ENCODE measurements at regions of chr19 and their contacts with region 1.

Region 1: DNA sequence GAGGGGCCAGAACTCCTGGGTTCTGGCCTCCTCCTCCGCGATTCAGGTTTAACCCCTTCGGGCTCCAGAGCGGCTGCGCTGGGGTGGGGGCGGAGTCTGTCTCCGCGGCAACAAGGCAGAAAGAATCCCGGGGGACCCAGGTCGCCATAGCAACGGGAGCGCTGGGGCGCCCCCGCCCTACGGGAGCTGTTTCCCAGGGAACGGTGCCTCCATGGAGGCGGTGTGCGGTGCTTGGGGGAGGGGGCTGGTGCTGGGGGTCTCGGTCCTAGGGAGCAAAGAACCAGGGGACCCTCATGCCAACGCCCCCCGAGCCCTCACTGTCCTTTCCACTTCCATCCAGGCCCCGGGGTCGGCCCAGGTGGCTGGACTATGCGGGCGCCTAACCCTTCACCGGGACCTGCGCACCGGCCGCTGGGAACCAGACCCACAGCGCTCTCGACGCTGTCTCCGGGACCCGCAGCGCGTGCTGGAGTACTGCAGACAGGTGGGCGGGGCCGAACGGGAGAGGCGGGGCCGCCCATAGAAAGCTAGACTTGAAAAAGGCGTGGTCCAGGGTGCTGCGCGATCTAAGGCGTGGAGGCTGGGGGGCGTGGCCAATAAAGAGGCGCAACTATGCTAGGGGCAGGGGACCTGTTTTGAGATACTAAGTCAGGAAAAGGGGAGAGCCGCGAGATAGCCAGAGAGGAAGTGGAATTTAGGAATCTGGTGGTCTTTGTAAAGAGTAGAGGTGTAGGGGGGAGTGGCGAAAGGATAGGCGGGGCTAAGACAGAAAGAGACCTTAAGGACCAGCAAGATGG is 1.2 kb downstream of the APLP1 start:
- DNase-seq: peak; percentile 55 to 88 (median 78)
- ATAC-seq: peak; percentile 95
- H3K4me3 ChIP-seq: no peak overlapping the region
- H3K4me3 Mint-ChIP-seq: peak overlapping the region; percentile 75 to 92 (median 82)
- H3K27ac ChIP-seq: no peak overlapping the region
- H3K27ac Mint-ChIP-seq: peak overlapping the region in 5 of 9 donors; percentile 12 to 68 (median 53)
- H3K4me1 ChIP-seq: peaks cover 16 to 18% of the 10 kb centered on the region in 2 donors
- H3K4me1 Mint-ChIP-seq: peaks cover 13 to 22% (median 17%) of the 10 kb centered on the region in 7 donors
- H3K27me3 ChIP-seq: peaks cover 5 to 7% of the 10 kb centered on the region in 2 donors
- H3K27me3 Mint-ChIP-seq: peaks cover 22 to 57% (median 42%) of the 10 kb centered on the region in 5 donors

Region 2: DNA sequence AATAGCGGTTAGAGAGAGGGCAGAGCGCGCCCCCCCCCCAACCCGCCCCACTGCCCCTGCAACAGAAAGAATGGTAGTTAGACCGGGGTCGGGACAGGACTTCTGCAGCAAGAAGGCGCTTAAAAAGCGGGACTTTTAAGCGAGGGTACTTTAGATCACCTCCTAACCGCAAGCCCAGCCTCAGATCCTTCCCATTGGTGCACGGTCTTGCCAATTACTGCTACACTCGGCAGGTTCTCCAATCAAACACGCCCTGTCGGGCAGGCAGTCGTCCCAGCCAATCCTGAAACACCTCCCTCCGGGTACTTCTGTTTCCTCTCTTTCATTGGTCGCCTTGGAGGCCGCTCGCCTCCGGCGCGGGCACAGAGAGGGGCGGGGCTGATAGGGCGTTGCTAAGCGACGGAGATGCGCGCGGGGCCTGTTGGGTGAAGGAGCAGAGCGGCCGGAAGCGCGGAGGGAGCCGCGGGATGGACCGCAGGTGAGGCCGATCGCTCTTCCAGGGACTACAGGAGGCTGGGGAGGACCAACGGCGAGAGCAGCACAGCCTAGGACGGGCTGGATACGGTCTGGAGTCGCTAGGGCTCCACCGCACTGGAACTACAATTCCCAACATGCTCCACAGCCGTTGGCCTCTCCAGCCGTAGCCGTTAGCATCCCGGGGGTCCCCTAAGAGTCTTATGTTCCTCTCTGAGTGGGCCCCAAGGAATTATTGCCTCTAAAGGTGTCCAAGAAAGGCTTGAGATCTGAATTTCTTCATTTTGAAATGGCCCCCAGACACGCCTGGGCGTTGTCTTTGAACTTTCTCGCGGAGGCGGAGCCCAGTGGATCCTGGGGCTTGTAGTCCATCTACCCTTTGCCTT is 111.5 kb before region 1 on chr19 and contains the start of gene PROSER3:
- CTCF ChIA-PET with region 1: no interaction called
- POLR2A ChIA-PET with region 1: no interaction called
- intact Hi-C with region 1: loop called in 1 of 2 experiments (anchors 2 kb)
- DNase-seq: peak; percentile 93 to 100 (median 99)
- ATAC-seq: peak; percentile 98
- H3K4me3 ChIP-seq: peak within 1 kb of the TSS; percentile 99
- H3K4me3 Mint-ChIP-seq: peak within 1 kb of the TSS; percentile 92 to 100 (median 96)
- H3K27ac ChIP-seq: peak within 1 kb of the TSS; percentile 92
- H3K27ac Mint-ChIP-seq: peak within 1 kb of the TSS; percentile 89 to 99 (median 95)
- H3K4me1 ChIP-seq: peaks cover 10 to 35% of the 10 kb centered on the region in 2 donors
- H3K4me1 Mint-ChIP-seq: peaks cover 13 to 42% (median 37%) of the 10 kb centered on the region in 7 donors
- H3K27me3 ChIP-seq: peaks cover 0 to 4% of the 10 kb centered on the region in 2 donors
- H3K27me3 Mint-ChIP-seq: peaks cover 0 to 12% (median 5%) of the 10 kb centered on the region in 5 donors
- total RNA-seq, gene PROSER3: 34.0 to 47.3 (median 39.7) TPM

Region 3: DNA sequence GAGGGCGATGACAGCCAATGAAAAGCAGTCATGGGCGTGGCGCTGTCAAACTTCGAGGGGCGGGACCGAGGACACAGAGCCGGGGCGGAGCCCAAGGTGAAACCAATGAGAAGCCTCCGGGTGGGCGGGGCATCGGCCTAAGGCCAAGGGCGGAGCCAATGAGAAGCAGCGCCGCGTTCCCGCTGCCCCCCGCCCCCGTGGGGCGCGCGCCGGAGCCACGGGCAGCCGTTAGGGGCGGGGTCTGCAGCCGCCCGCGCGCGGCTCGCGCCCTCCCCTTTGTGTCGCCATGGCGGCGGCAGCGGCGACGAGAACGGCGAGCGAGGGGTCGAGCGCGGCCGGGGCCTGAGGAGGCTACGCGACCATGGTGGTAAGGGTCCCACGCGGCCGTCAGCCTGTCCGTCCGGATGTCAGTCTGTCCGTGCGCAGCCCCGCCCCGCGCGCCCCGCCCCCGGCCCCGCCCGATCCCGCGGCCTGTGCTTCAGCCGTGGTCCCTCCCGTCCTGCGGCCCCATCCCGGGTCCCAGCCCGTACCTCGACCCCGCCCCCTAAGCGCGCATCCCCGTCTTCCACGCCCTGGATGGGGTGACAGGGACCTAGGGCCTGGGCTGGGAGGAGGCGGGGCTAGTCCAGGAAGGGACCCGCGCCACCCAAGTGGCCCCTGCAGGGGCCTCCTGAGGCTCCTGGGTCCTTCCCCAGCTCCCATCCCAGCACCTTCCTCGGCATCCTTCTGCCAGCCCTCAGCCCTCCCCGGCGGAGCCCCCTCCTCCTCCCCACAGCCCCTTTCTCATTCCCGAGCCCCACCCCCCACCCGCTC is 94.0 kb before region 1 on chr19 and contains the start of gene ARHGAP33:
- CTCF ChIA-PET with region 1: no interaction called
- POLR2A ChIA-PET with region 1: no interaction called
- intact Hi-C with region 1: loop called (anchors 1 to 2 kb)
- DNase-seq: peak; percentile 96 to 99 (median 98)
- ATAC-seq: peak; percentile 100
- H3K4me3 ChIP-seq: peak within 1 kb of the TSS; percentile 56
- H3K4me3 Mint-ChIP-seq: peak within 1 kb of the TSS; percentile 77 to 94 (median 86)
- H3K27ac ChIP-seq: peak within 1 kb of the TSS; percentile 61
- H3K27ac Mint-ChIP-seq: peak within 1 kb of the TSS in 7 of 9 donors; percentile 12 to 88 (median 84)
- H3K4me1 ChIP-seq: peaks cover 0 to 6% of the 10 kb centered on the region in 2 donors
- H3K4me1 Mint-ChIP-seq: peaks cover 11 to 28% (median 18%) of the 10 kb centered on the region in 7 donors
- H3K27me3 ChIP-seq: no peaks in the 10 kb centered on the region
- H3K27me3 Mint-ChIP-seq: no peaks in the 10 kb centered on the region
- total RNA-seq, gene ARHGAP33: 15.3 to 55.5 (median 23.4) TPM

Region 4: DNA sequence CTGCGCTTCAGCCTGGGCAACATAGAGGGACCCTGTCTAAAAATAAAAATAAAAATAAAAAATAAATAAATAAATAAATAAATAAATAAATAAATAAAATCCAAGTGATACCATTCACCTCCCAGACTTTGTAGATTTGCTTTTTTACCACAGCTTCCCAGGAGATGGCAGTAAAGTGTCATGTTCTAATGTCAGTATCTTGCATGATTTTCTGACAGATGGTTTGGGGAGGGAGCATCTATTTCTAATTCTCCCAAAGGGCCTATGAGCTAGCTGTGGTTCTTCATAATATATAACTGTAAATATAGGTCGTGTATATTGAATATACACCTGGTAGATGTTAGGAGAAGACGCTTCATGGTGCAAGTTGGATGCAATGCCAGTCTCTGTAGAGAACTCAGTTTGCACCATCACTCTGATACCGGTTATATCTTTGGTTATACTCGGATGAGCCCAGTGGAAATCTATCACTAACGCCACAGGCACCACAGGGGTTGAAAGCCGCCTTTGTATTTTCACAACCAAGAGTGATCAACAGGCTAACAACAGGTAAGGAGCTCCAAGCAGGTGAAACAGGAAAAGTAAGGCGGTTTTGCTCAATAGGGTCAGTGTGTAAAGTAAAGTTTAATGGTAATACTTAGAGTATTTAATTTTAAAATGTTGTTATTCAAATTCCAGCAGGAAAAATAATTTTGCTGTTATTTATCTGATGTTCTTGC is 12.7 kb after region 1 on chr19:
- CTCF ChIA-PET with region 1: no interaction called
- POLR2A ChIA-PET with region 1: no interaction called
- intact Hi-C with region 1: loop called in 1 of 2 experiments (anchors 1 kb)
- DNase-seq: peak in 7 of 9 donors; percentile 53 to 75 (median 71)
- ATAC-seq: peak; percentile 66
- H3K4me3 ChIP-seq: no peak overlapping the region
- H3K4me3 Mint-ChIP-seq: no peak overlapping the region
- H3K27ac ChIP-seq: no peak overlapping the region
- H3K27ac Mint-ChIP-seq: peak overlapping the region in 4 of 9 donors; percentile 42 to 55 (median 50)
- H3K4me1 ChIP-seq: peaks cover 4 to 9% of the 10 kb centered on the region in 2 donors
- H3K4me1 Mint-ChIP-seq: peaks cover 8 to 17% (median 11%) of the 10 kb centered on the region in 7 donors
- H3K27me3 ChIP-seq: peaks cover 4 to 6% of the 10 kb centered on the region in 2 donors
- H3K27me3 Mint-ChIP-seq: peaks cover 12 to 20% (median 18%) of the 10 kb centered on the region in 5 donors

Region 5: DNA sequence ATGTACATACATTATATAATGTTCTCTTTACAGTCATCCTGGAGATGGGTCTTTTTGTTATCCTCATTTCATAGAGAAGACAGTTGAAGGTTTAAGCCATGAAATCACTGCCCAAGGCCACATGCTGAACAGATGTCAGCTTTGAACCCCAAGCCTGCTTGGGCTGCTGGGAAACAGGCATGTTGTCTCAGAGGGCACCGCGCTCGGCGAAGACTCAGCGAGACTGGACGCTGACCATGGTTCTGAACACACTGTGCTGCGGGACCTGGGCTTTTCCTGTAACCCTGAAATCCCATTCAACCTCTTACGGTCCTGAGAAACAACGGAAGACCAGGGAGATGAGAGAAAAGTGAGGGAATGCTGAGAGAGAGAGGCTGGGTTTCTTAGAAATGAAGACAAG is 94.0 kb after region 1 on chr19:
- CTCF ChIA-PET with region 1: no interaction called
- POLR2A ChIA-PET with region 1: no interaction called
- intact Hi-C with region 1: no loop called
- DNase-seq: peak in 7 of 9 donors; percentile 26 to 57 (median 47)
- ATAC-seq: no peak
- H3K4me3 ChIP-seq: no peak overlapping the region
- H3K4me3 Mint-ChIP-seq: no peak overlapping the region
- H3K27ac ChIP-seq: no peak overlapping the region
- H3K27ac Mint-ChIP-seq: no peak overlapping the region
- H3K4me1 ChIP-seq: peaks cover 10 to 11% of the 10 kb centered on the region in 2 donors
- H3K4me1 Mint-ChIP-seq: peaks cover 0 to 15% (median 9%) of the 10 kb centered on the region in 7 donors
- H3K27me3 ChIP-seq: no peaks in the 10 kb centered on the region
- H3K27me3 Mint-ChIP-seq: peaks cover 0 to 30% (median 0%) of the 10 kb centered on the region in 5 donors

Measured in naive thymus-derived CD4-positive, alpha-beta T cell (primary cell).